Activated CD4-positive, alpha-beta T cell treated with anti-CD3 and anti-CD28 coated beads for 36 hours (primary cell): ENCODE measurements at regions of chr3 and their contacts with region 1.

Region 1: DNA sequence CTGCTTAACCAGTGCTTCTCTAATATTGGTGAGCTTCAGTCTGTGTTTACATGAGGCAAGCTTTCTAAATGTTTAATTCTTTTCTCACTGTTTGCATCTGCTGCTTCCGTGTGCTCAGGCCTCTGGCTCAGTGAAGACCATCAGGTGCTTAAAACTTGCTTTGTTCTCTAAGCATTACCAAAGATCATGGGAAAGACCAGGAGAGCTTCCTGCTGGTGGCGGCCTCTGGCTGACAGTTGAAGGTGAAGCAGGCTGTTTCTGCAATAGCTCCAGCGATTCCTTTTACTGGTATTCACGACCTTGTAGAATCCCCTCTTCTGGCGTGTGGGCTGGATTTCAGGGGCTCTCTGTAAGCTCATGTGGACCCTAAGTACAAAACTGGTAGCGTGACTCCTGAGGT is 45.1 kb downstream of the EDEM1 start:
- DNase-seq: no peak
- ATAC-seq: no peak
- H3K4me3 Mint-ChIP-seq: no peak overlapping the region
- H3K27ac Mint-ChIP-seq: no peak overlapping the region
- H3K4me1 Mint-ChIP-seq: no peaks in the 10 kb centered on the region
- H3K27me3 Mint-ChIP-seq: no peaks in the 10 kb centered on the region

Region 2: GRCh38 chr3:5304789-5305683 is 72.5 kb after region 1 on chr3:
- CTCF ChIA-PET with region 1: no interaction called
- POLR2A ChIA-PET with region 1: no interaction called
- intact Hi-C with region 1: no loop called
- DNase-seq: peak; percentile 70
- ATAC-seq: peak; percentile 81
- H3K4me3 Mint-ChIP-seq: no peak overlapping the region
- H3K27ac Mint-ChIP-seq: no peak overlapping the region
- H3K4me1 Mint-ChIP-seq: no peaks in the 10 kb centered on the region
- H3K27me3 Mint-ChIP-seq: peaks cover 3% of the 10 kb centered on the region

Region 3: GRCh38 chr3:5731094-5731493 is 498.5 kb after region 1 on chr3:
- CTCF ChIA-PET with region 1: no interaction called
- POLR2A ChIA-PET with region 1: no interaction called
- intact Hi-C with region 1: loop called in 1 of 2 experiments (anchors 10 kb)
- DNase-seq: no peak
- ATAC-seq: no peak
- H3K4me3 Mint-ChIP-seq: no peak overlapping the region
- H3K27ac Mint-ChIP-seq: no peak overlapping the region
- H3K4me1 Mint-ChIP-seq: no peaks in the 10 kb centered on the region
- H3K27me3 Mint-ChIP-seq: no peaks in the 10 kb centered on the region